Right cardiac atrium (tissue), 5 donors: ENCODE measurements at regions of chr16 and their contacts with region 1.

Region 1: GRCh38 chr16:87391950-87392822 is at the start of gene MAP1LC3B:
- DNase-seq: peak; percentile 96 to 99 (median 99)
- ATAC-seq: peak; percentile 93 to 95
- H3K4me3 ChIP-seq: peak within 1 kb of the TSS; percentile 71
- H3K27ac ChIP-seq: peak within 1 kb of the TSS; percentile 94
- H3K4me1 ChIP-seq: peaks cover 6% of the 10 kb centered on the region
- H3K27me3 ChIP-seq: no peaks in the 10 kb centered on the region
- total RNA-seq, gene MAP1LC3B: 87.7 to 114 (median 108) TPM

Region 2: DNA sequence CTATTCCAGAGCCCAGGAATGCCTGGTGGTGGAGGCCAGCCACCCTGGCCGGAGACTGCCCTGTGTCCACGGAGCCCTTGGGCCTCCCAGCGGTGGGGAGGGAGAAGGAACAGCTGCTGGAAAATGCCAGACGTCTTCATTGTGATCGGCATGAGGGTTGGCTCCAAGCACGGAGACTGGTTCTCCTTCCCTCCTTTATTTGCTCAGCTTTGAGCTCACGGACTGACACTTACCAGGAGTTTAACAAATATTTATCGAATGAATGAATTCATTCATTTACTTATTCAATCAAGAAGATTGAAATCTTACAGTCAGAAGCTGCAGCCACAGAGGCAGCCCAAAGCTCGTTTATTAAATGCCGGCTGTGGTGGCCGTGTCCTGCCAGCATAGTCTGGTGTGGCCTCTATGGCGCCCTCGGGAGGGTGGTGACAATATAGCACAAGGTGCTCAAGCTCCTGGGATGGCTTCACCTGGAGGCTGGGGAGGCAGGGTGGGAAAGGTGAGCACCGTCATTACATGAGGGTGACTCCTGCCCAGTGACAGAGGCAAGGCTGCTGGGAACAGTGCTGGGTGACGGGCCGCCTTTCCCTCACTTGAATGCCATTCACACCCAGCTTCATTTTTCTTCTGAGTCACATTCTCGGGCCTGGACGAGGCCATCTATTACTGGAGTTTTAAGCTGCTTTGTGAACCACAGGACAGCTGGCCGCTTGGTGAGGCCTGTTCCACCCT is 179.1 kb after region 1 on chr16:
- intact Hi-C with region 1: loop called in 1 of 4 experiments (anchors 5 kb)
- DNase-seq: peak; percentile 77 to 91 (median 90)
- ATAC-seq: peak; percentile 87 to 91
- H3K4me3 ChIP-seq: no peak overlapping the region
- H3K27ac ChIP-seq: no peak overlapping the region
- H3K4me1 ChIP-seq: peaks cover 3% of the 10 kb centered on the region
- H3K27me3 ChIP-seq: no peaks in the 10 kb centered on the region

Region 3: GRCh38 chr16:87636072-87636684 is 244.0 kb after region 1 on chr16:
- intact Hi-C with region 1: loop called in 1 of 4 experiments (anchors 10 kb)
- DNase-seq: peak; percentile 87 to 94 (median 94)
- ATAC-seq: peak; percentile 92 to 95
- H3K4me3 ChIP-seq: no peak overlapping the region
- H3K27ac ChIP-seq: no peak overlapping the region
- H3K4me1 ChIP-seq: no peaks in the 10 kb centered on the region
- H3K27me3 ChIP-seq: no peaks in the 10 kb centered on the region

Region 4: DNA sequence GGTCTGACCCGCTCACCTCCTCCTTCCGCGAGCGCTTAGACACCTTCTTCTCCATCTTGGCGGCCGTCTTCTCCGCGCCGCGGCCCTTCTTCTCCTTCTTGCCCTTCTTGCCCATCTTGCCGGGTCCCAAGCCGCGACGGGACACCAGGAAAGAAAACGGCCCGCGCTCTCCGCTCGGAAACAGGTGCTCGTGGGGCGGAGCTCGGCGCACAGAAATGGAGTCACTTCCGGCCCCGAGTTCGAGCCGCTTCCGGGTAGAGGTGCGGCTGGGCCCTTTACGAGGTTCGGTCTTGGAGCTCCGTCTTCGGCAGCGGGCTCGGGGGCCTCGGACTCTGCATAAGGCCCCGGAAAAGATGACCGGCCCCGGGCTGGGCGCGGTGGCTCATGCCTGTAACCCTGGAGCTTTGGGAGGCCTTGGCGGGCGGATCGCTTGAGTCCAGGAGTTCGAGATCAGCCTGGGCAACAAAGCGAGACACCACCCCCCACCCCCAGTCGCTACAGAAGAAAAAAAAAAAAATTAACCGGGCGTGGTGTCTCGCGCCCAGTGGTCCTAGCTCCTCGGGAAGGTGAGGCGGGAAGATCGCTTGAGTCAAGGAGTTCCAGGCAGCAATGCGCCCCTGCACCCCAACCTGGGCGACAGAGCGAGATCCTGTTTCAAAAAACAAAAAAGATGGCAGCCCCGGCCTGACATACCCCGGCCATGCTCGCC is 373.7 kb after region 1 on chr16 and contains the start of gene KLHDC4:
- intact Hi-C with region 1: loop called in 1 of 4 experiments (anchors 10 kb)
- DNase-seq: peak; percentile 87 to 95 (median 95)
- ATAC-seq: peak; percentile 94
- H3K4me3 ChIP-seq: peak within 1 kb of the TSS; percentile 91
- H3K27ac ChIP-seq: peak within 1 kb of the TSS; percentile 95
- H3K4me1 ChIP-seq: peaks cover 7% of the 10 kb centered on the region
- H3K27me3 ChIP-seq: no peaks in the 10 kb centered on the region
- total RNA-seq, gene KLHDC4: 11.4 to 16.5 (median 15.2) TPM